Activated T-helper 1 cell treated with anti-CD3 and anti-CD28 coated beads, Interleukin-12 subunit alpha, Interleukin-12 subunit beta, Interleukin-2, Interleukin-4 antibody, amounts not matched to agents 30 ng/mL and 10 ng/mL and 1 ng/mL, durations not matched to agents 14 hours and 24 hours and 36 hours (primary cell): ENCODE measurements at regions of chr1 and their contacts with region 1.

Region 1: GRCh38 chr1:45490626-45491486 is at the start of gene TESK2:
- DNase-seq: peak; percentile 97
- H3K4me3 Mint-ChIP-seq: no peak within 1 kb of the TSS
- H3K27ac Mint-ChIP-seq: no peak within 1 kb of the TSS
- H3K4me1 Mint-ChIP-seq: peaks cover 5% of the 10 kb centered on the region
- H3K27me3 Mint-ChIP-seq: no peaks in the 10 kb centered on the region
- total RNA-seq, gene TESK2: 1.4 and 1.6 TPM in 2 replicates

Region 2: DNA sequence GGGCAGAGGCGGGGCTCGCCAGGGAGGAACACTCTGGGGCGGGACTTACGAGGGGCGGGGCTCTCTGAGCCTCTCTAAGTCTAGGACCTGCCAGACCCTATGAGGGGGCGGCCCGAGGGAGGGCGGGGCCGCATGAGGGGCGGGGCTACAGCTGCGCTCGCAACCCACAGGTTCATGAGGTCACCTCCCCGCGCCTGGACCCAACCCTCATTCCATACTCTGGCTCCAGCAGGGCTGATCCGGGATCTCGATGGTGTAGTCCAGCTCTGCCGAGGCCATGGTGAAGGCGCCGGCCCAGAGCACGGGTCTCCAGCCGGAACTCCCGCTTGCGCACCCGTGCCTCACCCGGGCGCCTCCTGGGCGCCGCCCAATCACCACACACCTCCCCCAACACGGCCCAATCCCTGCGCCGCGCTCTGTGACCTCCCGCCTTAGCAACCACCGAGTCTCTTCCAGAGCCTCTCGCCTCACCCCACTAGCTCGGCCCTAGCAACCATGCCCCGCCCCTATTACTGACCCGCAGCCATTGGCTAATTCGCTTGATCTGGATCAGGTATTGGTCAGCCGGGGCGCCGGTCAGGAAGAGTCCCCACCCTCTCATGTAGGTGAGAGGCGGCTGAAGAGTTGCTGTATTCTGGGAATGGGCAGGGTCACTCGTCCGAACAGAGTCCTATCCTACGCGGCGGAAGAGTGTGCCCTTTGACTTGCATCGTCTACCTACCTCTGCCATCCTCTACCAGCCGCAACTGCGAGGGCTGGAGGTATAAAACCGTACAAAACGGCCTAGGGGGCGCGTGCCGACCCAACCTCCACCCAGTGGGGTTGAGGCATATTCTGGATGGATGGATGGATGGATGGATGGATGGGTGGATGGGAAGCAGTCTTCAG is 816.5 kb before region 1 on chr1 and contains the starts of genes ARMH1 and TMEM53:
- intact Hi-C with region 1: loop called (anchors 1 kb)
- DNase-seq: peak; percentile 98
- H3K4me3 Mint-ChIP-seq: peak within 1 kb of the TSS; percentile 80
- H3K27ac Mint-ChIP-seq: peak within 1 kb of the TSS; percentile 79
- H3K4me1 Mint-ChIP-seq: peaks cover 30% of the 10 kb centered on the region
- H3K27me3 Mint-ChIP-seq: no peaks in the 10 kb centered on the region
- total RNA-seq, gene ARMH1: 95.3 and 99.8 TPM in 2 replicates
- total RNA-seq, gene TMEM53: 4.3 and 6.6 TPM in 2 replicates

Region 3: GRCh38 chr1:44807262-44808062 is 683.4 kb before region 1 on chr1 and contains the start of gene DYNLT4:
- intact Hi-C with region 1: loop called (anchors 5 kb)
- DNase-seq: peak; percentile 84
- H3K4me3 Mint-ChIP-seq: peak within 1 kb of the TSS; percentile 68
- H3K27ac Mint-ChIP-seq: peak within 1 kb of the TSS; percentile 99
- H3K4me1 Mint-ChIP-seq: peaks cover 88% of the 10 kb centered on the region
- H3K27me3 Mint-ChIP-seq: no peaks in the 10 kb centered on the region
- total RNA-seq, gene DYNLT4: 0.44 TPM in 1 of 2 replicates, not detected in the other

Region 4: GRCh38 chr1:45339789-45340570 is 150.9 kb before region 1 on chr1 and contains the starts of genes MUTYH and TOE1:
- intact Hi-C with region 1: loop called (anchors 1 kb)
- DNase-seq: peak; percentile 94
- H3K4me3 Mint-ChIP-seq: peak within 1 kb of the TSS; percentile 99
- H3K27ac Mint-ChIP-seq: peak within 1 kb of the TSS; percentile 100
- H3K4me1 Mint-ChIP-seq: peaks cover 39% of the 10 kb centered on the region
- H3K27me3 Mint-ChIP-seq: no peaks in the 10 kb centered on the region
- total RNA-seq, gene MUTYH: 53.4 and 55.9 TPM in 2 replicates
- total RNA-seq, gene TOE1: 39.1 and 41.4 TPM in 2 replicates

Region 5: DNA sequence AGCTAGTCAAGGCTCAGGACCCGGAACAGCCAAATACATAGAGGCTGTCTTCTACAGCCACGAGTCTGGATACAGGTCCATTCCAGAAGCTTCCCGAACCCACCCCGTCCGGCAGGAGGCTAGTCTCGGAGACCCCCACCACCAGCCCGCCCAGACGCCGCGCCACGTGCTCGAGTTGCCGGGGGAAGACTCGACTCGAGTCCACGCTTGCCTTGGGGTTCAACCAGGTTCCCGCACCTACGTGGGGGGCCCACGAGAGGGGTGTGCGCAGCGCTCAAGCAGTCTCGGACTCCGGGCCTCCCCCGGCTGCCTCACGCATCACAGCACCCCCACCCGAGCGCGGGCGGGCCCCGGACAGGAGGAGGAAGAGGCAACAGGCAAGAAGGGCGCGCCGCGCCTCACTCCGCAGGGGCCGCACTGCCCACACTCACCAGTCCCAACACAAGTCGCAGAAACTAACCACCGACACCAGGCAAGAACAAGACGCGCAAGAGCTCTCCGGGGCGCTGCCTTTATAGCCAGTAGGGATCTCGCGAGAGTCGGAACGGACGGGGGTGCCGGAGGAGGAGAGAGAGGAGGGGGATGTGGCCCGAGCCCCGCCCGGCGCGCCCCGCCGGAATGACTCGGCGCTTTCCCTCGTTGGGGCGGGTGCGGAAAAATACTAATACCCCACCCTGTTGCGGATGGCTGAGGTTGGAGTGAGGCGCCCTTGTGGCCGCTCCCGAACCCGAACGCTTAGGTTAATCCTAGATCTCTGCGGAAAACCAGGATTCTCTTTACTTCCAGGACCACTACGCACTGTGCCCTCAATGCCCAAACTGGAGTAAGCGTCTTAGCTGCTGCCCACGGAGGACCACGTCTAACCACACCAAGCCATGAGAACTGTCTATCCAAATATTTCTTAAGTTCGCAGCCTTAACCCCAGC is 30.8 kb after region 1 on chr1 and contains the start of gene PRDX1:
- intact Hi-C with region 1: loop called (anchors 2 kb)
- DNase-seq: peak; percentile 97
- H3K4me3 Mint-ChIP-seq: peak within 1 kb of the TSS; percentile 98
- H3K27ac Mint-ChIP-seq: peak within 1 kb of the TSS; percentile 91
- H3K4me1 Mint-ChIP-seq: peaks cover 44% of the 10 kb centered on the region
- H3K27me3 Mint-ChIP-seq: peaks cover 1% of the 10 kb centered on the region
- total RNA-seq, gene PRDX1: 635 and 655 TPM in 2 replicates

Region 6: GRCh38 chr1:45750298-45751038 is 259.6 kb after region 1 on chr1 and contains the start of gene IPP:
- intact Hi-C with region 1: loop called (anchors 2 kb)
- DNase-seq: peak; percentile 96
- H3K4me3 Mint-ChIP-seq: peak within 1 kb of the TSS; percentile 98
- H3K27ac Mint-ChIP-seq: peak within 1 kb of the TSS; percentile 96
- H3K4me1 Mint-ChIP-seq: peaks cover 10% of the 10 kb centered on the region
- H3K27me3 Mint-ChIP-seq: no peaks in the 10 kb centered on the region
- total RNA-seq, gene IPP: 12.3 and 13.9 TPM in 2 replicates

Region 7: GRCh38 chr1:46303038-46303871 is 812.4 kb after region 1 on chr1 and contains the starts of genes LRRC41 and UQCRH:
- intact Hi-C with region 1: loop called (anchors 5 kb)
- DNase-seq: peak; percentile 92
- H3K4me3 Mint-ChIP-seq: peak within 1 kb of the TSS; percentile 100
- H3K27ac Mint-ChIP-seq: peak within 1 kb of the TSS; percentile 99
- H3K4me1 Mint-ChIP-seq: peaks cover 35% of the 10 kb centered on the region
- H3K27me3 Mint-ChIP-seq: no peaks in the 10 kb centered on the region
- total RNA-seq, gene LRRC41: 62.1 and 62.6 TPM in 2 replicates
- total RNA-seq, gene UQCRH: 258 and 268 TPM in 2 replicates